Activated CD4-positive, alpha-beta T cell treated with anti-CD3 and anti-CD28 coated beads, Interleukin-2, amount 10 ng/mL, durations not matched to agents 24 days and 14 days (primary cell): ENCODE measurements at regions of chr4 and their contacts with region 1.

Region 1: DNA sequence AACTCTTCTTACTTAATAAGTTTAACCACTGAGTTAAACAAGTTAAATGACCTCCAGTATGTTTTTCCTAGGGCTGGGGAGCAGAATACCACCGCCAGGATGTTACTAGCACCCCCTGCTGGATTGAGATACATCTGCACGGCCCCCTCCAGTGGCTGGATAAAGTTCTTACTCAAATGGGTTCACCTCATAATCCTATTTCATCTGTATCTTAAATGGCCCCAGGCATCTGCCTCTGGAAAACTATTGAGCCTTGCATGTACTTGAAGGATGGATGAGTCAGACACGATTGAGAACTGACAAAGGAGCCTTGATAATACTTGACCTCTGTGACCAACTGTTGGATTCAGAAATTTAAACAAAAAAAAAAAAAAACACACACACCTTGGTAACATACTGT is 61.5 kb upstream of the MMAA start:
- DNase-seq: peak; percentile 84
- H3K4me3 Mint-ChIP-seq: no peak overlapping the region
- H3K27ac Mint-ChIP-seq: no peak overlapping the region
- H3K4me1 Mint-ChIP-seq: no peaks in the 10 kb centered on the region
- H3K27me3 Mint-ChIP-seq: peaks cover 3% of the 10 kb centered on the region

Region 2: GRCh38 chr4:145216535-145216934 is 341.2 kb before region 1 on chr4:
- intact Hi-C with region 1: loop called (anchors 5 kb)
- DNase-seq: no peak
- H3K4me3 Mint-ChIP-seq: no peak overlapping the region
- H3K27ac Mint-ChIP-seq: no peak overlapping the region
- H3K4me1 Mint-ChIP-seq: no peaks in the 10 kb centered on the region
- H3K27me3 Mint-ChIP-seq: peaks cover 11% of the 10 kb centered on the region

Region 3: GRCh38 chr4:145234091-145234706 is 323.5 kb before region 1 on chr4:
- intact Hi-C with region 1: loop called (anchors 1 kb)
- DNase-seq: peak; percentile 85
- H3K4me3 Mint-ChIP-seq: no peak overlapping the region
- H3K27ac Mint-ChIP-seq: no peak overlapping the region
- H3K4me1 Mint-ChIP-seq: no peaks in the 10 kb centered on the region
- H3K27me3 Mint-ChIP-seq: peaks cover 14% of the 10 kb centered on the region

Region 4: DNA sequence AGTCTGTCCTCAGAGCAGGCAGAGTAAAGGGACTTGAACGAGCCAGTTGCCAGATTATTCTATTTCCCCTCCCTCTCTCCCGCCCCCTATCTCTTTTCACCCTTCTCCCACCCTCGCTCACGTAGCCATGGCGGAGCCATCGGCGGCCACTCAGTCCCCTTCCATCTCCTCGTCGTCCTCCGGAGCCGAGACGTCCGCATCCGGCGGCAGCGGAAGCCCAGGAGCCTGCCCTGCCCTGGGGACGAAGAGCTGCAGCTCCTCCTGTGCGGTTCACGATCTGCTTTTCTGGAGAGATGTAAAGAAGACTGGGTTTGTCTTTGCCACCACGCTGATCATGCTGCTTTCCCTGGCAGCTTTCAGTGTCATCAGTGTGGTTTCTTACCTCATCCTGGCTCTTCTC is 182.3 kb before region 1 on chr4:
- intact Hi-C with region 1: no loop called
- DNase-seq: no peak
- H3K4me3 Mint-ChIP-seq: no peak overlapping the region
- H3K27ac Mint-ChIP-seq: no peak overlapping the region
- H3K4me1 Mint-ChIP-seq: no peaks in the 10 kb centered on the region
- H3K27me3 Mint-ChIP-seq: no peaks in the 10 kb centered on the region

Region 5: GRCh38 chr4:145609481-145610427 is 52.0 kb after region 1 on chr4:
- intact Hi-C with region 1: loop called (anchors 5 kb)
- DNase-seq: peak; percentile 89
- H3K4me3 Mint-ChIP-seq: no peak overlapping the region
- H3K27ac Mint-ChIP-seq: no peak overlapping the region
- H3K4me1 Mint-ChIP-seq: peaks cover 7% of the 10 kb centered on the region
- H3K27me3 Mint-ChIP-seq: peaks cover 12% of the 10 kb centered on the region